ENCODE measurements at regions of chr2 and their contacts with region 1.

Region 1: DNA sequence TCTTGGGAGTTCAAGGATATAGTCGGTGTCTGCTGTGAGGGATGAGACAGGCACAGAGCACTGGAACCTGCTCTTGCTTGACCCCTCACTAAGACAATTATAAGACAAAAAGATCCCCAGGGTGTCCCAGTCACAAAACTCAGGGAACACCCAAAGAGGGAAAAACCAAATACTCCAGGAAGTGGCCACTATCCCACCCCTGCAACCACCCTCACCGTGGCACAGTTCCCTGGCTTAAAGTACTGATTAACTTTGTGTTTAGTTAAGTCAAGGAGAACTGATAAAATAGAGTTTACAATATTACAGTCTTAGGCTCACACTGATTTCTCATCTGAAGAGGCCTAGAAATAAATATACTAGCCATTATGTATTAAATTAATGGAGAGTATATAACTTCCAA is 13.5 kb downstream of the IL36B start:
- DNase-seq: no peak
- H3K4me3 ChIP-seq: no peak overlapping the region
- H3K4me3 Mint-ChIP-seq: no peak overlapping the region
- H3K27ac Mint-ChIP-seq: no peak overlapping the region
- H3K4me1 ChIP-seq: no peaks in the 10 kb centered on the region
- H3K4me1 Mint-ChIP-seq: no peaks in the 10 kb centered on the region
- H3K27me3 ChIP-seq: no peaks in the 10 kb centered on the region
- H3K27me3 Mint-ChIP-seq: peaks cover 7% of the 10 kb centered on the region
- CTCF ChIP-seq: no peak

Region 2: DNA sequence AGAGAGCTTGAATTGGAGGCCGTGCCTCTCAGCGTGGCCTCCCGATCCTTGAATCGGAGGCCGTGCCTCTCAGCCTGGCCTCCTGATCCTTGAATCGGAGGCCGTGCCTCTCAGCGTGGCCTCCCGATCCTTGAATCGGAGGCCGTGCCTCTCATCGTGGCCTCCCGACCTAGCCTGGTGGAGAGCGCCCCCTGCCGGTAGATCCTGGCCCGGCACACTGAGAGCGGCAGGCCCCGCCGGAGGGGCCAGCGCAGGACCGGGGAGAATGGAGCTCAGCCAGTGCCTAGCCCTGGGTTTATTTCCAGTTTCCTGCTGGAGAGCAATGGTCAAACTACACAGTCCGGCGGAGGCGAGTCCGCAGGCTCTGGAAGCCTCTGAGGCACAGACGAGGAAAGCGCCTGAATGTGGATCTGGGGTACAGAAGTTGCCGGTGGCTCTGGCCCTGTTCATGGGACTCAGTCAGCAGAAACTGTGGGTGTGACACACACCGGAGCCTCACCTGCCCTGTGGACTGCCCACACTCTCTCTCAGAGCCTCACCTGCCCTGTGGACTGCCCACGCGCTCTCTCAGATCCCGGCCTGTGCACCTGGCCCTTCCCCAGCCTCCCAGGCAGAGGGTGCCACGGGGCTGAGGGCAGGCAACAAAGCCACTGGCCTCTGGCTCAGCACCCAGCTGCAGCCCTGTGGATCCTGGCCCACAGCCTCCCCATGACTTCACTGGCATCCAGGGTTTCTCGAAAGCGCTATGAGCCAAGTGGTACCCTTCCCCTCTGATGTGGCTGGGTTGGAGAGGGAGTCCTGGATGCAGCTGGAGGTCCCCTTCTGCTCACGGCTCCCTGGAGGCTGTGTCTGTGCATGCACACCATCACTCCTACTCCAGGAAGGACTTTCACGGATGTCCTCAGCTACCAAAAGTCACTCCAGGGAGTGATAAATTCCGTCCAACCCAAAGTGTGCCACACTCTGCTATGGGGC is 12.1 kb after region 1 on chr2:
- CTCF ChIA-PET with region 1: no interaction called
- POLR2A ChIA-PET with region 1: no interaction called
- intact Hi-C with region 1: loop called (anchors 1 kb)
- DNase-seq: no peak
- H3K4me3 ChIP-seq: no peak overlapping the region
- H3K4me3 Mint-ChIP-seq: no peak overlapping the region
- H3K27ac Mint-ChIP-seq: no peak overlapping the region
- H3K4me1 ChIP-seq: no peaks in the 10 kb centered on the region
- H3K4me1 Mint-ChIP-seq: peaks cover 5% of the 10 kb centered on the region
- H3K27me3 ChIP-seq: no peaks in the 10 kb centered on the region
- H3K27me3 Mint-ChIP-seq: no peaks in the 10 kb centered on the region
- CTCF ChIP-seq: no peak

Measured in Caco-2 (cell line).